A549 (cell line): ENCODE measurements at regions of chr1 and their contacts with region 1.

Region 1: GRCh38 chr1:93680757-93681550 is 683 bp downstream of the BCAR3 start:
- DNase-seq: peak; percentile 90 to 92
- ATAC-seq: peak; percentile 93 to 94
- H3K4me3 ChIP-seq: peak overlapping the region; percentile 94
- H3K27ac ChIP-seq: peak overlapping the region; percentile 93 to 100
- H3K4me1 ChIP-seq: peaks cover 51% of the 10 kb centered on the region
- CTCF ChIP-seq: peak; percentile 36; the same call in 1 of the 3 replicates
- EP300 ChIP-seq: no peak
- POLR2A ChIP-seq: peak; percentile 31; the same call in 1 of the 2 replicates
- RAD21 ChIP-seq: peak; percentile 64 to 67

Region 2: DNA sequence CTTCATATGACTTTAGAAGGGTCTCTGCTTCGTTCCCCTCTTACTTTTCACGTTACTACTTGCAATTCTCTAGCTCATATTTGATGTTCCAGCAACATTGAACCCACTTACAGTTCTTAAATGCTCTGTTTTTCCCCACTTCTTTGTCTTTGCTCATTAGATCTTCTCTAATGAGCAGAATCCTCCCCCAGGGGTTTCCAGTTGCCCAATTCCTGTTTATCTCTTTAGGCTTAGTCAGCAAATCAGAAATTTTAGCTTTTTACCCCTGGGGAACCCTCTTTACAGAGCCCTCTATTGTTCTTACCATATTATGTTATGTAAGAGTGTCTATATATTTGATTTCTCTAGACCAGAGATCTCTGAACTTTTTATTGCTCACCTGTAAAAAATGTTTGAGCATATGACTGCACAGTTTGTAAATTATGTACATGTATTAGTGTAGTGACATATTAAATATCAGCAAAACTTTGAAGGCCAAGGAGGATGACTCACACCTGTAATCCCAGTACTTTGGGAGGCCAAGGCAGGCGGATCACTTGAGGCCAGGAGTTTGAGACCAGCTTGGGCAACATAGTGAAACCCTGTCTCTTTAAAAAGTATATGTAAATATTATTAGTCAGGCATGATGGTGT is 161.6 kb before region 1 on chr1:
- CTCF ChIA-PET with region 1: no interaction called
- POLR2A ChIA-PET with region 1: no interaction called
- DNase-seq: peak in 1 of 2 experiments; percentile 12
- ATAC-seq: no peak
- H3K4me3 ChIP-seq: no peak overlapping the region
- H3K27ac ChIP-seq: peak overlapping the region in 1 of 2 experiments; percentile 42; a peak in 2 of 6 replicates
- H3K4me1 ChIP-seq: peaks cover 18% of the 10 kb centered on the region
- CTCF ChIP-seq: no peak
- EP300 ChIP-seq: no peak
- POLR2A ChIP-seq: no peak
- RAD21 ChIP-seq: no peak

Region 3: DNA sequence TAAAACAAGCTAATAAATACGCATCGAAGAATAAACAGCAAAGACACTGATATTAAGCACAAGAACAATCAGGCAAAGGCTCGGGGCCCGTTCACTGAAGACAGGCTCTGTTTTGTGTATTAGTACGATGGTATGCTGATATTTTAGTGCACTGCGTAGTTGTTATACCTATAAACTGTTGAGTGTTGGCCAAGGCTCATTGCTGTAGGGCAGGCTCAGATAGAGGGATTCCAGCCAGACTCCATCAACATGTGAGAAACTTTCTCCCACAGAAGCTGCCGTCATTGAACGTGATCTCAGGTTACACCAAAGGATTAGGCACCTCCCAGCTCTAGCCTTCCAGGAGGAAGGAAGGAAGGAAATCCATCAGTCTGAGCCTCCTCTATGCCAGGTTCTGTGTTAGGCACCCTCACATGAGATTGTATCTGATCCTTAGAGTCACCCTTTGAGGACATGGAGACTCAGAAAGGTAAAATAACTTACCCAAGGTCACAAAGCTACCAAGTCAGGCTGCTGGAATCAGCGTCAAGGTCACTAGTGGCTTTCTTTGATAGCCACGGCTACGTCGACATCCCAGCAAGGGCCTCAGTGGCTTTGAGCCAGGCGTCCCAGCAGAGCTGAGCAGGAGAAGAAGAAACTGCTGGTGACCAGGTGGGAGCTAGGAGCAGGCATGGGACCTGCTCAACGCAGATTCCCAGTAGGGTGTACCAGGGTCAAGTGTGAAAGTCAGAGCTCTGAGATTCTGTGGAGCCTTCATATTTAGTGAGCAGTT is 14.2 kb before region 1 on chr1:
- CTCF ChIA-PET with region 1: interaction called, 22 read pairs
- POLR2A ChIA-PET with region 1: interaction called, 4 read pairs
- DNase-seq: peak in 1 of 2 experiments; percentile 45
- ATAC-seq: no peak
- H3K4me3 ChIP-seq: no peak overlapping the region
- H3K27ac ChIP-seq: peak overlapping the region; percentile 94 to 95; a peak in 5 of 6 replicates
- H3K4me1 ChIP-seq: peaks cover 97% of the 10 kb centered on the region
- CTCF ChIP-seq: no peak
- EP300 ChIP-seq: no peak
- POLR2A ChIP-seq: no peak
- RAD21 ChIP-seq: no peak

Region 4: GRCh38 chr1:93846211-93846991 is 165.4 kb after region 1 on chr1:
- CTCF ChIA-PET with region 1: interaction called, 6 read pairs
- POLR2A ChIA-PET with region 1: interaction called, 11 read pairs
- DNase-seq: peak; percentile 68 to 82
- ATAC-seq: peak; percentile 74 to 83
- H3K4me3 ChIP-seq: peak overlapping the region; percentile 58
- H3K27ac ChIP-seq: peak overlapping the region; percentile 84 to 95
- H3K4me1 ChIP-seq: peaks cover 19% of the 10 kb centered on the region
- CTCF ChIP-seq: no peak
- EP300 ChIP-seq: no peak
- POLR2A ChIP-seq: peak; percentile 36
- RAD21 ChIP-seq: no peak; a peak in 1 of 5 replicates

Region 5: DNA sequence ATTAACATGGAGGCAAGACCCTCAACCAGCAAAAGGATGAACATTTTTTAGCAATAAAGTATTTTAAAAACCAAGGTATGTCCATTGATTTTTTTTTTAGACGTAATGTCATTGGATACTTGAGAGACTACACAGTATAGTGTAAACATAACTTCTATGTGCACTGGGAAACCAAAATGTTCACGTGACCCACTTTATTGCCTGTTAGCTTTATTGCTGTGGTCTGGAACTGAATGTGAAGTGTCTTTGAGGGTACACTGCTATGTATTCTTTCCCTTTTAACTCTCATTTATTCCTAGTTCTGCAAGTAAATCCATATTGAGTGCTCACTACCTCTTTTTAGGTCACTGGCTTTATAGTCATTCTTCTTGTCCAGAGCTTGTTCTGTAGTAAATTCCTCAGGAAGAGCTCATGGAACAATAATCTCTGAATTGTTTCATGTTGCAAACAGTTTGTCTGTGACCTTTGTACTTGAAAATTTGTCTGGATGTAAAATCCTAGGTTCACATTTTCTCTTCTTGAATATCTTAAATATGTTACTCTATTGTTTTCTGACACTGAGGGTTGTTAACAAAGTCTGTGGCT is 757.8 kb after region 1 on chr1:
- CTCF ChIA-PET with region 1: no interaction called
- POLR2A ChIA-PET with region 1: no interaction called
- DNase-seq: no peak
- ATAC-seq: no peak
- H3K4me3 ChIP-seq: no peak overlapping the region
- H3K27ac ChIP-seq: no peak overlapping the region
- H3K4me1 ChIP-seq: peaks cover 21% of the 10 kb centered on the region; the same call in 2 of the 3 replicates
- CTCF ChIP-seq: no peak
- EP300 ChIP-seq: no peak
- POLR2A ChIP-seq: no peak
- RAD21 ChIP-seq: no peak